CD4-positive, alpha-beta T cell (primary cell): ENCODE measurements at regions of chr9 and their contacts with region 1.

Region 1: GRCh38 chr9:93095205-93096130 is 549 bp upstream of the CARD19 start:
- DNase-seq: peak; percentile 100
- ATAC-seq: peak; percentile 81
- H3K4me3 ChIP-seq: peak overlapping the region; percentile 62
- H3K4me3 Mint-ChIP-seq: peak overlapping the region; percentile 95
- H3K27ac ChIP-seq: peak overlapping the region; percentile 94 to 95
- H3K27ac Mint-ChIP-seq: peak overlapping the region; percentile 99
- H3K4me1 ChIP-seq: peaks cover 75% of the 10 kb centered on the region
- H3K4me1 Mint-ChIP-seq: peaks cover 78% of the 10 kb centered on the region
- H3K27me3 ChIP-seq: no peaks in the 10 kb centered on the region
- H3K27me3 Mint-ChIP-seq: no peaks in the 10 kb centered on the region
- CTCF ChIP-seq: no peak

Region 2: DNA sequence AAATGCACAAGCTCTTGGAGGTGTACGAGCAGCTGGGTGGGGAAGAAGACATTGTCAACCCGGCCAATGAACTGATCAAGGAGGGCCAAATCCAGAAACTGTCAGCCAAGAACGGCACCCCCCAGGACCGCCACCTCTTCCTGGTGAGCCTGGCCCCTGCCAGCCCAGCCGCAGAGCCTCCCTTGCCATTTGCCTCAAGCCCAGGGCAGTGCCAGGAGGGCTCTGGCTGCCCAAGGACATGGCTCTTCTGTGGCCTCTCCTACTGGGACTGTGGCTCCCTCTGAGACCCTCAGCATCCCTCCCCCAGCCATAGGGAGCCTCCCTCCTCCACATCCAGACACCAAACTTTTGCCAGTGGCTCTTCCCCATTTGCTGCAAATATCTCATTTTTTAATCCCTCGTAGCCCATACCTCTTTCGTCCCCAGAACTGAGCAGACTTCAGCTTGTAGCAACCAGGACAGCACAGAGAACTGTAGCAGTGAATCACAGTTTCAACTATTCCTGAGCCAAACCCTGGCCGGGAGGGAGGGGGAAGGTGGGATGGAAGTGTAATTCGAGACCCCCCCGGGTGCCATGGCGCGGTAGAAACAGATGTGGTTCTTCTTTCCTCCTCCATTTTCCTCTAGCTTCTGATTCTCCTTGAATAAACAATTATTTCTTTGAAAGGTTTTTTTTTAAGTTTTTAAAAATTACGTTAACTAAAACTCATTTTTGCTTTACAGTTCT is 81.4 kb before region 1 on chr9:
- CTCF ChIA-PET with region 1: no interaction called
- POLR2A ChIA-PET with region 1: interaction called, 3 read pairs
- intact Hi-C with region 1: loop called in 1 of 2 experiments (anchors 5 kb)
- DNase-seq: peak in 1 of 14 experiments; percentile 28
- ATAC-seq: no peak
- H3K4me3 ChIP-seq: no peak overlapping the region
- H3K4me3 Mint-ChIP-seq: no peak overlapping the region
- H3K27ac ChIP-seq: no peak overlapping the region
- H3K27ac Mint-ChIP-seq: peak overlapping the region; percentile 58
- H3K4me1 ChIP-seq: peaks cover 16% of the 10 kb centered on the region
- H3K4me1 Mint-ChIP-seq: peaks cover 14% of the 10 kb centered on the region
- H3K27me3 ChIP-seq: no peaks in the 10 kb centered on the region
- H3K27me3 Mint-ChIP-seq: no peaks in the 10 kb centered on the region
- CTCF ChIP-seq: no peak

Region 3: DNA sequence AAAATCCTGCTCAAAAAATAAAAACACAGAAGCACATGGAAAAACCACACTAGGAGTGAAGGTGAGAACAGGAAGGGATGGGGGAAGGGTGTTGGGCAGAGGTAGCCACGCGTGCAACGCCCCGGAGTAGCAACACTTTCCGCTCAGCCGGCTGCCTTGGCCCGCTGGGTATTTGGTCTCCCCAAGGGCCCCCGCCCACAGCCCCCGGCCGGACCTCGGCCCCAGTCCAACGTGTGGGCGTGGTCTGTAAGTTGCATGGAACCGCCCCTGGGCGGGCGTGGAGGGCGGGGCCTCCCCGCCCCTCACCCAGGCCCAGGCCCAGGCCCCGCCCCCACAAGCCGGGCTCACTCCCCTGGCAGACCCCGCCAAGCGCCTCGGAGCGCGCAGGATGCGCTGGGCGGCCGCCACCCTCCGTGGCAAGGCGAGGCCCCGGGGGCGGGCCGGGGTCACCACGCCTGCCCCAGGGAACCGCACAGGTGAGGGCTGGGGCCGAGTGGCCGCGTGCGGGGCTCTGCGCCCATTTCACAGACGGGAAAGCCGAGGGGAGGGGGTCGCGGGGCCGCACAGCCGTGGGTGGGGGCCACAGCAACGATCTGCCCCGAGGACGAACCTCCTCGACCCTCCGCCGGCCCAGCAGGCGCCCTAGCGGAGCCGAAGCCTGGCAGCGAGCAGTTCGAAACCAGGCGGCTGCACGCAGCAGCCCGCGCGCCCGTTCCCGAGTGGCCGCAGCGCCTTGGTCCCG is 36.9 kb before region 1 on chr9 and contains the start of gene SUSD3:
- CTCF ChIA-PET with region 1: no interaction called
- POLR2A ChIA-PET with region 1: interaction called, 23 read pairs
- intact Hi-C with region 1: no loop called
- DNase-seq: peak; percentile 46 to 86 (median 69)
- ATAC-seq: peak; percentile 62
- H3K4me3 ChIP-seq: peak within 1 kb of the TSS; percentile 91
- H3K4me3 Mint-ChIP-seq: peak within 1 kb of the TSS; percentile 96
- H3K27ac ChIP-seq: peak within 1 kb of the TSS; percentile 83 to 90
- H3K27ac Mint-ChIP-seq: peak within 1 kb of the TSS; percentile 100
- H3K4me1 ChIP-seq: peaks cover 74% of the 10 kb centered on the region
- H3K4me1 Mint-ChIP-seq: peaks cover 74% of the 10 kb centered on the region
- H3K27me3 ChIP-seq: no peaks in the 10 kb centered on the region
- H3K27me3 Mint-ChIP-seq: no peaks in the 10 kb centered on the region
- CTCF ChIP-seq: no peak
- total RNA-seq, gene SUSD3: 33.9 to 35.6 TPM

Region 4: DNA sequence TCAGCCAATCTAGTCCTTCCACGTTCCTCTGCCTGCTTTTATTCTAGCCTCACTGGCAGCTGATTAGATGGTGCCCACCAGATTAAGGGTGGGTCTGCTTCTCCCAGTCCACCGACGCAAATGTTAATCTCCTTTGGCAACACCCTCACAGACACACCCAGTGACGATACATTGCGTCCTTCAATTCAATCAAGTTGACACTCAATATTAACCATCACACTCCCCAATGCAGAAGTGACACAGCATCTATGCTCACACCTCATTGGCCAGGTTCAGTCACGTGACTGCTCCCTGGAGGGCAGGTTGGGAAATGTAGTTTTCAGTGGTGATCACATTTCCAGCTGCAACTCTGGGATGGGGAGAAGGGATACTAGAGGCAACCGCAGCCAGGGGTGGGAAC is 24.0 kb before region 1 on chr9:
- CTCF ChIA-PET with region 1: interaction called, 4 read pairs
- POLR2A ChIA-PET with region 1: interaction called, 12 read pairs
- intact Hi-C with region 1: no loop called
- DNase-seq: peak in 4 of 14 experiments; percentile 22 to 55 (median 36)
- ATAC-seq: peak; percentile 71
- H3K4me3 ChIP-seq: no peak overlapping the region
- H3K4me3 Mint-ChIP-seq: peak overlapping the region; percentile 42
- H3K27ac ChIP-seq: peak overlapping the region in 1 of 2 donors; percentile 9
- H3K27ac Mint-ChIP-seq: peak overlapping the region; percentile 83
- H3K4me1 ChIP-seq: peaks cover 69% of the 10 kb centered on the region
- H3K4me1 Mint-ChIP-seq: peaks cover 83% of the 10 kb centered on the region
- H3K27me3 ChIP-seq: no peaks in the 10 kb centered on the region
- H3K27me3 Mint-ChIP-seq: no peaks in the 10 kb centered on the region
- CTCF ChIP-seq: no peak

Region 5: DNA sequence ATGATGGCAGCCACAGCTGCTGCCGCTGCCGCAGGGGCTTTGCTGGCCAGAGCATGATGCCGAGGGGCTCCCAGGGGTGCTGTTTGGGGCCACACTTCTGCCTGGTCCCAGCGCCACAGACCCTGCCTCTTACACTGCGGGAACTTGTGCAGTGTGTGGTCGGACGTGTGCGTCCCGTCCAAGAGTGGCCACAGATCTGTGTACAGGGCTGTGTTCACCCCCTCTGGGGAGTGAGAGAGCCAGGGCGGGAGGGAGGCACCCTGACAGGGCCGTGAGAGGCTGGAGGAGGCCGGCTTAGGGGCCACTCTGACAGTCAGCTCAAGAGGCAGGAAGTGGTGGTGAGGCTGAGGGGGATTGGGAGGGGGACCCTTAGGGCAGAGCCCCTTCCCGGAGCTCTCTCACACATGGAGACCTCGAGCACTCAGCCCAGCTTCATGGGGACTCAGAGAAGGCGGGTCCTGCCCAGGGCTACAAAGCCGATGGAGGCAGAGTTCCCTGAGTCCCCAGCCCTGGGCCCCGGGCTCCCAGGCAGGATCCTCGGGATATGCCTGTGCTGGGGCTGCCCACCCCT is 12.5 kb before region 1 on chr9:
- CTCF ChIA-PET with region 1: no interaction called
- POLR2A ChIA-PET with region 1: interaction called, 10 read pairs
- intact Hi-C with region 1: no loop called
- DNase-seq: peak in 4 of 14 experiments; percentile 19 to 32 (median 24)
- ATAC-seq: peak; percentile 32
- H3K4me3 ChIP-seq: no peak overlapping the region
- H3K4me3 Mint-ChIP-seq: no peak overlapping the region
- H3K27ac ChIP-seq: peak overlapping the region; percentile 54 to 80
- H3K27ac Mint-ChIP-seq: peak overlapping the region; percentile 97
- H3K4me1 ChIP-seq: peaks cover 34% of the 10 kb centered on the region
- H3K4me1 Mint-ChIP-seq: peaks cover 24% of the 10 kb centered on the region
- H3K27me3 ChIP-seq: no peaks in the 10 kb centered on the region
- H3K27me3 Mint-ChIP-seq: no peaks in the 10 kb centered on the region
- CTCF ChIP-seq: no peak

Region 6: GRCh38 chr9:93108291-93109041 is 13.0 kb after region 1 on chr9:
- CTCF ChIA-PET with region 1: interaction called, 22 read pairs
- POLR2A ChIA-PET with region 1: interaction called, 26 read pairs
- intact Hi-C with region 1: no loop called
- DNase-seq: peak in 2 of 14 experiments; percentile 39 to 48
- ATAC-seq: no peak
- H3K4me3 ChIP-seq: no peak overlapping the region
- H3K4me3 Mint-ChIP-seq: no peak overlapping the region
- H3K27ac ChIP-seq: no peak overlapping the region
- H3K27ac Mint-ChIP-seq: peak overlapping the region; percentile 52
- H3K4me1 ChIP-seq: peaks cover 65% of the 10 kb centered on the region
- H3K4me1 Mint-ChIP-seq: peaks cover 58% of the 10 kb centered on the region
- H3K27me3 ChIP-seq: no peaks in the 10 kb centered on the region
- H3K27me3 Mint-ChIP-seq: no peaks in the 10 kb centered on the region
- CTCF ChIP-seq: no peak

Region 7: DNA sequence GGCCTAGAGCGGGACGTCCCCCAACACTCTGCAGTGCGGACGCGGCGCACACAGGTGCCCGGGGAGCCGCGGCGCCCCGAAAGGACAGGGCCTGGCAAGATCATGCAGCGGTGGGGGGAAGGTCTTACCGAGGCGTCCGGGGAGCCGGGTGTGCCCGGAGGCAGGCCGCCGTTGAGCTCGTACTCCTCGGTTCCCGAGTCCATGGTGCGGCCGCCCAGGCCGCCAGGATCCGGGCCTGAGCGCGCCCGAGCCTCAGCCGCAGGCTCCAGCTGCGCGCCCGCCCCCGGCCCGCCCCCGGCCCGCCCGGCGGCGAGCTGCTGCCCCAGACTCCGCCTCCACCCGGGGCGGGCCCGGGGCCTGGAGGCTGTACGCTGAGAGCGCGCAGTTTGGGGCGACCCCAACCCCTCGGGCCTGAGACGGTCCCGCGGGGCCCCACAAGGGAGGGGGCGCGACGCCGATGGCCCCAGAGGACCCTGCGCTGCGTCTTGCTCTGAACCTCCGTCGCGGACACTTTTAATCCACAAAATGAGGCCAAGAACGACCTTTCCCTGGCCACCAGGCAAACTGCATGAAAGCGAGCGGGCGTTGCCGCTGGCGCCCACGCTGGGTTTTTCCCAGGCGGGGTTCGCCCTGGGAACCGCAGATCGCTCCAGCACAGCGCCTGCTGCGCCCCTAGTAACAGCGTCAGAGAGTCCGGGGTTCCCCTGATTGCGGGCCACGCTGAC is 38.7 kb after region 1 on chr9 and contains the start of gene NINJ1:
- CTCF ChIA-PET with region 1: no interaction called
- POLR2A ChIA-PET with region 1: interaction called, 20 read pairs
- intact Hi-C with region 1: loop called (anchors 2 kb)
- DNase-seq: peak; percentile 40 to 98 (median 73)
- ATAC-seq: peak; percentile 83
- H3K4me3 ChIP-seq: peak within 1 kb of the TSS; percentile 86
- H3K4me3 Mint-ChIP-seq: peak within 1 kb of the TSS; percentile 96
- H3K27ac ChIP-seq: peak within 1 kb of the TSS; percentile 91 to 96
- H3K27ac Mint-ChIP-seq: peak within 1 kb of the TSS; percentile 94
- H3K4me1 ChIP-seq: peaks cover 79% of the 10 kb centered on the region
- H3K4me1 Mint-ChIP-seq: peaks cover 77% of the 10 kb centered on the region
- H3K27me3 ChIP-seq: no peaks in the 10 kb centered on the region
- H3K27me3 Mint-ChIP-seq: no peaks in the 10 kb centered on the region
- CTCF ChIP-seq: no peak
- total RNA-seq, gene NINJ1: 87.8 to 87.9 TPM